ENCODE measurements at regions of chrX and their contacts with region 1.

Region 1: DNA sequence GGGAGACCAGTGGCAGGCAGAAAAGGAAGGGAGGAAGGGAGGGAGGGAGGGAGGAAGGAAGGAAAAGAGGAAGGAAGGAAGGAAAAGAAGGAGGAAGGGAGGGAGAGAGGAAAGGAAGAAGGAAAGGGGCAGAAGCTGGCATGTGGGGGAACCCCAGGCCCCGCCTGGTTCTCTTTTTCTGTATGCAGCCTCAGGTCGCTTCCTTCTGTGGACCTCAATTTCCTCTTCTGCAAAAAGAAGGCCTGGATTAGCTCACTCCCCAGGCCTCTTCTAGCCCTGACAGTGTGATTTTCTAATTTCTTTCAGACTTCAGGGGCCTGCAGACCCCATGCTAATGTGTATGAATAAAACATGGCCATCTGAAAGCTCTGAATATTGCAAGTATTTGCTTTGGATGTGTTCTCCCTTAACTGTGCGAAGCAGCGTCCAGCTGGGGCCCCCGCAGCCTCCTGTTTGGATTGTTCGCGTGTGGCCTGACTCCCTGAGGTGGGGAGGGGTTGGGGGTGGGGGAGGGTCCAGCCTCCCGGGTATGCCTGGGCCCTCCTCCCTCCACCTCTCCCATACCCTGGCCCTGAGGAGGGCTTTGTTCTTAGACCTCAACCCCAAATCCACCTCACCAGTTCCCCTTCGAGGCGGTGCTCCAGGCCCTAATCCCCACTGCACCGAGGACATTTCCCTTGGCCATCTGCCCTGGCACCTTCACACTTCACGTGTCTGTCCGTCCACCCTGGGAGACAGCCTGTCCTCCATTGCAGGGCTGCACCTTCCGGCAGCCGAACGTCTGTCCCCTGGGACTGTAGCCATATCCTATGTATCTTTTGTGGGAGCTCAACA is 199.9 kb upstream of the ATP6AP2 start:
- DNase-seq: no peak
- ATAC-seq: no peak
- H3K4me3 ChIP-seq: no peak overlapping the region
- H3K4me3 Mint-ChIP-seq: no peak overlapping the region
- H3K27ac ChIP-seq: no peak overlapping the region
- H3K27ac Mint-ChIP-seq: no peak overlapping the region
- H3K4me1 ChIP-seq: no peaks in the 10 kb centered on the region
- H3K4me1 Mint-ChIP-seq: no peaks in the 10 kb centered on the region
- H3K27me3 ChIP-seq: no peaks in the 10 kb centered on the region
- H3K27me3 Mint-ChIP-seq: peaks cover 4 to 7% of the 10 kb centered on the region in 2 donors
- CTCF ChIP-seq: no peak

Region 2: DNA sequence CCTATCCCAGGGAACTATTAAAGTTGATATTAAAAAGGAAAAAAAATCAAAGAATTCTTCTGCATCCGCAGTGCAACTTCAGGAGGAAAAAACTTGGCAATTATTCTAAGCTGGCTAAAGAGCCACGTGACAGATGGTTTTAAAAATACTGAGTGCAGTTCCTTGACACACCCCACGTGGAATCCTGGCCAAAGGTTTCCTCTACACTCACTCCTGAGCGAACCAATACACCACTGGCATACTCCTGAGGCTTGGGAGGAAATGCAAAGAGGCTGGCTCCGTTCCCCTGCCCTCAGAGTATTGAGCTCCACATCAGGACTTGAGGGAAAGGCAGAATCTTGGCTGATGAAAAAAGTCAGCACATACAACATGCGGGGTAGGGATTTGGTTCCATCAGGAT is 66.0 kb after region 1 on chrX:
- intact Hi-C with region 1: loop called (anchors 10 kb)
- DNase-seq: no peak
- ATAC-seq: no peak
- H3K4me3 ChIP-seq: no peak overlapping the region
- H3K4me3 Mint-ChIP-seq: no peak overlapping the region
- H3K27ac ChIP-seq: no peak overlapping the region
- H3K27ac Mint-ChIP-seq: no peak overlapping the region
- H3K4me1 ChIP-seq: peaks cover 10% of the 10 kb centered on the region
- H3K4me1 Mint-ChIP-seq: peaks cover 11% of the 10 kb centered on the region in 2 donors
- H3K27me3 ChIP-seq: no peaks in the 10 kb centered on the region
- H3K27me3 Mint-ChIP-seq: peaks cover 2 to 12% of the 10 kb centered on the region in 2 donors
- CTCF ChIP-seq: no peak

Measured in natural killer cell (primary cell).